Activated B cell treated with CpG ODN at 0.5 μM for 24 hours (primary cell): ENCODE measurements at regions of chr17 and their contacts with region 1.

Region 1: GRCh38 chr17:65055348-65056261 is 935 bp downstream of the GNA13 start:
- DNase-seq: peak; percentile 55
- ATAC-seq: peak; percentile 21
- H3K4me3 Mint-ChIP-seq: peak overlapping the region; percentile 96
- H3K27ac Mint-ChIP-seq: peak overlapping the region; percentile 90
- H3K4me1 Mint-ChIP-seq: peaks cover 55% of the 10 kb centered on the region
- H3K27me3 Mint-ChIP-seq: no peaks in the 10 kb centered on the region
- CTCF ChIP-seq: no peak

Region 2: DNA sequence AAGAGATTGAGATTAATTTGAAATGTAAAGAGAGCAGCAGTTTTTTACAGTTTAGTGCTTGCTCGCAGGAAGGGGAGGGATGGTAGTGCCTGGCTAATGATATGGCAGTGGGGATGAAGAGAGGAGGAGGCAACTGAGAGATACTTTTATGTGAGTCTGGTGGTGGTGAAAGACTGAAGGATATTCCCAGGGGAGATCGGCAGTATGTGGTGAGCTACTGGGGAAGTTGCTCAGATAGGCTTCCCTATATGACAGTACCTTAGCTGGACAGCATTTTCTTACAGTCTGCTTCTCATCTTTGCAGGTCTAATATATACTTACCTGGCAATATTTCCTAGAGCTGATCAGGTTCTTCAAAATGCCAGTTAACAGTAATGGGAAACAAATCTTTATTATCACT is 540.2 kb before region 1 on chr17:
- CTCF ChIA-PET with region 1: no interaction called
- POLR2A ChIA-PET with region 1: no interaction called
- intact Hi-C with region 1: no loop called
- DNase-seq: no peak
- ATAC-seq: peak; percentile 87
- H3K4me3 Mint-ChIP-seq: no peak overlapping the region
- H3K27ac Mint-ChIP-seq: peak overlapping the region; percentile 13
- H3K4me1 Mint-ChIP-seq: peaks cover 13% of the 10 kb centered on the region
- H3K27me3 Mint-ChIP-seq: no peaks in the 10 kb centered on the region
- CTCF ChIP-seq: no peak

Region 3: GRCh38 chr17:64920026-64920418 is 135.6 kb before region 1 on chr17:
- CTCF ChIA-PET with region 1: no interaction called
- POLR2A ChIA-PET with region 1: interaction called, 8 read pairs
- intact Hi-C with region 1: loop called (anchors 2 kb)
- DNase-seq: no peak
- ATAC-seq: no peak
- H3K4me3 Mint-ChIP-seq: peak overlapping the region; percentile 87
- H3K27ac Mint-ChIP-seq: peak overlapping the region; percentile 92
- H3K4me1 Mint-ChIP-seq: peaks cover 47% of the 10 kb centered on the region
- H3K27me3 Mint-ChIP-seq: no peaks in the 10 kb centered on the region
- CTCF ChIP-seq: no peak

Region 4: GRCh38 chr17:64975329-64976087 is 80.1 kb before region 1 on chr17:
- CTCF ChIA-PET with region 1: interaction called, 3 read pairs
- POLR2A ChIA-PET with region 1: interaction called, 46 read pairs
- intact Hi-C with region 1: loop called (anchors 1 kb)
- DNase-seq: peak; percentile 98
- ATAC-seq: peak; percentile 76
- H3K4me3 Mint-ChIP-seq: peak overlapping the region; percentile 92
- H3K27ac Mint-ChIP-seq: peak overlapping the region; percentile 99
- H3K4me1 Mint-ChIP-seq: peaks cover 57% of the 10 kb centered on the region
- H3K27me3 Mint-ChIP-seq: no peaks in the 10 kb centered on the region
- CTCF ChIP-seq: no peak

Region 5: GRCh38 chr17:64998436-64999190 is 57.0 kb before region 1 on chr17:
- CTCF ChIA-PET with region 1: no interaction called
- POLR2A ChIA-PET with region 1: no interaction called
- intact Hi-C with region 1: no loop called
- DNase-seq: no peak
- ATAC-seq: peak; percentile 73
- H3K4me3 Mint-ChIP-seq: no peak overlapping the region
- H3K27ac Mint-ChIP-seq: no peak overlapping the region
- H3K4me1 Mint-ChIP-seq: peaks cover 33% of the 10 kb centered on the region
- H3K27me3 Mint-ChIP-seq: no peaks in the 10 kb centered on the region
- CTCF ChIP-seq: no peak

Region 6: GRCh38 chr17:65039336-65039988 is 16.1 kb before region 1 on chr17:
- CTCF ChIA-PET with region 1: interaction called, 3 read pairs
- POLR2A ChIA-PET with region 1: interaction called, 9 read pairs
- intact Hi-C with region 1: loop called (anchors 2 kb)
- DNase-seq: no peak
- ATAC-seq: peak; percentile 73
- H3K4me3 Mint-ChIP-seq: peak overlapping the region; percentile 53
- H3K27ac Mint-ChIP-seq: peak overlapping the region; percentile 85
- H3K4me1 Mint-ChIP-seq: peaks cover 92% of the 10 kb centered on the region
- H3K27me3 Mint-ChIP-seq: no peaks in the 10 kb centered on the region
- CTCF ChIP-seq: no peak

Region 7: GRCh38 chr17:65092262-65092661 is 36.7 kb after region 1 on chr17:
- CTCF ChIA-PET with region 1: no interaction called
- POLR2A ChIA-PET with region 1: no interaction called
- intact Hi-C with region 1: no loop called
- DNase-seq: no peak
- ATAC-seq: no peak
- H3K4me3 Mint-ChIP-seq: no peak overlapping the region
- H3K27ac Mint-ChIP-seq: no peak overlapping the region
- H3K4me1 Mint-ChIP-seq: peaks cover 4% of the 10 kb centered on the region
- H3K27me3 Mint-ChIP-seq: no peaks in the 10 kb centered on the region
- CTCF ChIP-seq: no peak

Region 8: GRCh38 chr17:65122836-65123756 is 67.5 kb after region 1 on chr17:
- CTCF ChIA-PET with region 1: no interaction called
- POLR2A ChIA-PET with region 1: interaction called, 8 read pairs
- intact Hi-C with region 1: loop called (anchors 1 kb)
- DNase-seq: peak; percentile 64
- ATAC-seq: peak; percentile 85
- H3K4me3 Mint-ChIP-seq: peak overlapping the region; percentile 87
- H3K27ac Mint-ChIP-seq: peak overlapping the region; percentile 96
- H3K4me1 Mint-ChIP-seq: peaks cover 18% of the 10 kb centered on the region
- H3K27me3 Mint-ChIP-seq: peaks cover 5% of the 10 kb centered on the region
- CTCF ChIP-seq: no peak

Region 9: GRCh38 chr17:65198653-65199382 is 143.2 kb after region 1 on chr17:
- CTCF ChIA-PET with region 1: interaction called, 3 read pairs
- POLR2A ChIA-PET with region 1: interaction called, 5 read pairs
- intact Hi-C with region 1: loop called (anchors 1 kb)
- DNase-seq: no peak
- ATAC-seq: peak; percentile 67
- H3K4me3 Mint-ChIP-seq: no peak overlapping the region
- H3K27ac Mint-ChIP-seq: peak overlapping the region; percentile 8
- H3K4me1 Mint-ChIP-seq: no peaks in the 10 kb centered on the region
- H3K27me3 Mint-ChIP-seq: peaks cover 2% of the 10 kb centered on the region
- CTCF ChIP-seq: peak; percentile 78